Pancreas (tissue), 10 donors: ENCODE measurements at regions of chr19 and their contacts with region 1.

Region 1: DNA sequence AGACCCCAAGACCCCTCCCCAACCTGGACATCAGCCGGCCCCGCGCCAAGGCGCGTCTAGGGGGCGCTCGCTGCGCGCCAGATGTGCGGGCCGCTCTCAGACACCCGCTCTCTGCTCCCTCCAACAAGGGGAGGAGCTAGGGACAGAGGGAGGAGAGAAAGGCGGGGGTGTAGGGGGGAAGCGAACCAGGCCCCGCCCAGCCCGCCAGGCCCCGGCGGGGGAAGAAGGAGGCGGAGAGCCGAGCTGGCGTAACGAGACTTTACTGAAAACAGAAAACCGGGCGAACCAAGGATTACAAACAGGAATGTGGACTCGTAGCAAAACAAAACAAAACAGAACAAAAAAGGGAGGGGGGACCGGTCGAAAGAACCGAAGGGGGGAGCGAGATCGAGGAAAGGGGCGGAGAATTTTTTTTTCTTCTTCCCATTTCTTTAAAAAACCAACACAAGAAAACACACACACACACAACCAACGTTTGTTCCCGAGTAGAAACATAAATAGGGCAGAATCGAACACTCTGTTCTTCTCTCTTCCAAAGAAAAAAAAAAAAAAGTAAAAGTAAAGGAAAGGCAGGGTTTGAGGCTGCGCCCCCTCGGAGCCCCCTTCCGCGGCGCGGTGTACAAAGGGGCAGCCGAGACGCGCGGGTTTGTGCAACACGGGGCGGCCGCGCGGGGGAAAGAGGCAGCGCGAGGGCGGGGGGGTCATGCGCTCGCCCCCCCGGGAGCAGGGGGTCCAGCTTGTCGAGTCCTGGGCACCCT is 1.7 kb downstream of the JUND start:
- DNase-seq: peak; percentile 91 to 95 (median 93)
- ATAC-seq: peak; percentile 49 to 74 (median 72)
- H3K4me3 ChIP-seq: peak overlapping the region; percentile 43 to 97 (median 80)
- H3K27ac ChIP-seq: peak overlapping the region; percentile 97 to 100 (median 100)
- H3K4me1 ChIP-seq: peaks cover 10 to 51% (median 33%) of the 10 kb centered on the region in 3 donors
- H3K27me3 ChIP-seq: no peaks in the 10 kb centered on the region
- CTCF ChIP-seq: peak; percentile 38 to 68 (median 56)

Region 2: DNA sequence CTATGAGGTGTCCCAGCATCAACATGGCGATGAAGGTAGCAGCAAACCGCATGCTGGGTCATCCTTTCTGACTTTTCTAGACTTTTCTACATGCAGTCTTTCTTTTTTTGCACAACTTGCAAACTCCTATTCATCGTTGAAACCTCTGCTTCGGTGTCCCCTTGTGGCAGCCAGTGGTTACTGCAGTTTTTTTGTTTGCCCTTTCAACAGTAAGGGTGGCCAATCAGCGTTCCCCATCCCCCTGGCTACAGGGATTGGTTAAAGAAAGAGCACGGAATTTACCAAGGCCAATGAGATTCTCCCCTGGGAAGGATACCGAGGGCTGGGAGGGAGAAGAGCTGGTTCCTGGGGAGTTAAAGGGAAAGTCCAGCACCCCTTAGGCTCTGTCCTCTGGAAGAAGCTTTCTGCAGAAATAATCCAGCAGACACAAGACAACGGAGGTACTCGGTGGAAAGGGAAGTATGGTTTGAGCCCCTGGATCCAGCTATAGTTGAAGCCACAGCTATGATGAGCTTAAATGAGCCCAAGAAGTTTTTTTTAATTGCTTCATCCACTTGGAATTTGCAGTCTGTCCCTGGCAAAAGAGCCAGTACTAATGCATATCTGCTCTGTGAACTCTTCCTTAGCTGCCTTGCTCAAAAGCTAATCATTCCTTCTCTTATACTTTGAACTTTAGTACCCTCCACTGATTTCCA is 48.8 kb after region 1 on chr19:
- intact Hi-C with region 1: loop called in 2 of 3 experiments (anchors 5 kb)
- DNase-seq: peak; percentile 79 to 94 (median 88)
- ATAC-seq: peak; percentile 96 to 99 (median 98)
- H3K4me3 ChIP-seq: peak overlapping the region in 1 of 4 donors; percentile 31
- H3K27ac ChIP-seq: peak overlapping the region in 3 of 4 donors; percentile 22 to 74 (median 53)
- H3K4me1 ChIP-seq: peaks cover 7 to 11% (median 10%) of the 10 kb centered on the region in 3 donors
- H3K27me3 ChIP-seq: no peaks in the 10 kb centered on the region
- CTCF ChIP-seq: peak; percentile 86 to 90 (median 88)

Region 3: GRCh38 chr19:18379803-18380747 is 100.4 kb after region 1 on chr19:
- intact Hi-C with region 1: no loop called
- DNase-seq: peak; percentile 83 to 97 (median 96)
- ATAC-seq: peak; percentile 75 to 88 (median 83)
- H3K4me3 ChIP-seq: no peak overlapping the region
- H3K27ac ChIP-seq: peak overlapping the region; percentile 37 to 93 (median 78)
- H3K4me1 ChIP-seq: peaks cover 26 to 58% (median 37%) of the 10 kb centered on the region in 3 donors
- H3K27me3 ChIP-seq: no peaks in the 10 kb centered on the region
- CTCF ChIP-seq: no peak